Activated CD4-positive, alpha-beta memory T cell treated with anti-CD3 and anti-CD28 coated beads for 36 hours (primary cell): ENCODE measurements at regions of chr12 and their contacts with region 1.

Region 1: DNA sequence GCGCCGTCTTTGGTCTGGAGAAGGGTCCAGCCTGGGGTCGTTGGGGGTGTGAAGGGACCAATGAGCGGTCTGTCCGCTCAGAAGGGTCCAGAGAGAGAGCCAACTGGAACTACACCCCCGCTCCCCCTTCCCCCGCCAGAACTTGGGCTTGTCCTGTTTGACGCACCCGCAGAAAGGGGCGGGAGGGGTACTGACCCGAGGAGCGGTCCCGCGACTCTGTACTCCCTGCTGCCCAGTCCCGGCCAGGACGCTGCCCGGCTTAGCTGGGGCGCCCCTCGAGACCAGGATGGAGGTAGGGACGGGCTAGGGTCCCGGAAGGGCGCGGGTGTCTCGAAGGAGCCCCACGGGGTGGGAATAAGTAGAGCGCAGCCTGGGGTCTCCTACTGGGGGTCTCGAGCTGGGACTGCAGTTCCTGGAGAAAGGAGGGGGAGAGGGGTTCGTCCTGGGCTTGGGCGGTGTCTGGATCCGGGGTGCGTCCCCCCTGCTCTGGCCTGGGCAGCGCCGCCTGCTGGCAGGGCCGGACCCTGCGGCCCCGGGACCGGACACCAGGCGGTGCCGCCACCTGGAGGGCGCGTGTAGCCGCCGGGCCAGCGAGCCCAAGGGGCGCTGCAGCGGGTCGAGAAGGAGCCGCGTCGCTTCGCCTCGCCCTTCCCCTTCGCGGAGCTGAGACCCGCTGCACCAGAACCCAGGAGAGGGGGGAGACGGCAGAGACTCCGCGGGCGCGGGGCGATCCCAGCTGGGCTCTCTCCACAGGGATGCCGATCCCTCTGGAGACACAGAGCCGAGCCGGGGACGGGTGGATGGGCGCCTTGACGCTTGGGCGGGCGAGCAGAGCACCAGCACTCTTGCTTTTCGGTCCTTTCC is 3.8 kb upstream of the CACNB3 start:
- DNase-seq: peak; percentile 89
- H3K4me3 Mint-ChIP-seq: peak overlapping the region; percentile 88
- H3K27ac Mint-ChIP-seq: no peak overlapping the region
- H3K4me1 Mint-ChIP-seq: peaks cover 29% of the 10 kb centered on the region
- H3K27me3 Mint-ChIP-seq: peaks cover 7% of the 10 kb centered on the region

Region 2: GRCh38 chr12:48681738-48682532 is 132.6 kb before region 1 on chr12 and contains the start of gene KANSL2:
- CTCF ChIA-PET with region 1: interaction called, 5 read pairs
- POLR2A ChIA-PET with region 1: interaction called, 7 read pairs
- intact Hi-C with region 1: loop called (anchors 2 kb)
- DNase-seq: peak; percentile 99
- H3K4me3 Mint-ChIP-seq: peak within 1 kb of the TSS; percentile 99
- H3K27ac Mint-ChIP-seq: peak within 1 kb of the TSS; percentile 94
- H3K4me1 Mint-ChIP-seq: peaks cover 41% of the 10 kb centered on the region
- H3K27me3 Mint-ChIP-seq: no peaks in the 10 kb centered on the region
- total RNA-seq, gene KANSL2: 45.7 to 48.4 TPM

Region 3: GRCh38 chr12:48750769-48751735 is 63.4 kb before region 1 on chr12:
- CTCF ChIA-PET with region 1: interaction called, 22 read pairs
- POLR2A ChIA-PET with region 1: interaction called, 3 read pairs
- intact Hi-C with region 1: loop called (anchors 5 kb)
- DNase-seq: peak; percentile 27
- H3K4me3 Mint-ChIP-seq: no peak overlapping the region
- H3K27ac Mint-ChIP-seq: peak overlapping the region; percentile 76
- H3K4me1 Mint-ChIP-seq: peaks cover 20% of the 10 kb centered on the region
- H3K27me3 Mint-ChIP-seq: no peaks in the 10 kb centered on the region

Region 4: DNA sequence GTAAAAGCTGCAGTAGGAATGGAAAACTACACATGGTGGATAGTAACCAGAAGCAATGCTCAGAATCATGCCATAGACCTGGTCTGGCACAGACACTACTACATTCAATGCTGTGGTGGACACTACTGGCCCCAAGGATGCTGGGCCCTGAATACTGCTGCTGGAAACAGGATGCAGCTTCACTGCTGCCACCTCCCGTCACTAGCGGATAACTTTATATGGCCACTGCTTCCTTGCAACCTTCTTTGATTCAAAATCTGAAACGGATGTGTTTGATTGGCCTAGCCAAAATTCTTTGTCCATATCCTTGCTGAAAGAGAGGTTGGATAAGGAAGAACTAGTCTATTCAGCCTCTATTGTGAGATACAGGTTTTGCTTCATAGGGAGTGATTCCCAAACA is 56.3 kb before region 1 on chr12:
- CTCF ChIA-PET with region 1: interaction called, 22 read pairs
- POLR2A ChIA-PET with region 1: interaction called, 3 read pairs
- intact Hi-C with region 1: loop called (anchors 5 kb)
- DNase-seq: no peak
- H3K4me3 Mint-ChIP-seq: no peak overlapping the region
- H3K27ac Mint-ChIP-seq: no peak overlapping the region
- H3K4me1 Mint-ChIP-seq: no peaks in the 10 kb centered on the region
- H3K27me3 Mint-ChIP-seq: no peaks in the 10 kb centered on the region

Region 5: DNA sequence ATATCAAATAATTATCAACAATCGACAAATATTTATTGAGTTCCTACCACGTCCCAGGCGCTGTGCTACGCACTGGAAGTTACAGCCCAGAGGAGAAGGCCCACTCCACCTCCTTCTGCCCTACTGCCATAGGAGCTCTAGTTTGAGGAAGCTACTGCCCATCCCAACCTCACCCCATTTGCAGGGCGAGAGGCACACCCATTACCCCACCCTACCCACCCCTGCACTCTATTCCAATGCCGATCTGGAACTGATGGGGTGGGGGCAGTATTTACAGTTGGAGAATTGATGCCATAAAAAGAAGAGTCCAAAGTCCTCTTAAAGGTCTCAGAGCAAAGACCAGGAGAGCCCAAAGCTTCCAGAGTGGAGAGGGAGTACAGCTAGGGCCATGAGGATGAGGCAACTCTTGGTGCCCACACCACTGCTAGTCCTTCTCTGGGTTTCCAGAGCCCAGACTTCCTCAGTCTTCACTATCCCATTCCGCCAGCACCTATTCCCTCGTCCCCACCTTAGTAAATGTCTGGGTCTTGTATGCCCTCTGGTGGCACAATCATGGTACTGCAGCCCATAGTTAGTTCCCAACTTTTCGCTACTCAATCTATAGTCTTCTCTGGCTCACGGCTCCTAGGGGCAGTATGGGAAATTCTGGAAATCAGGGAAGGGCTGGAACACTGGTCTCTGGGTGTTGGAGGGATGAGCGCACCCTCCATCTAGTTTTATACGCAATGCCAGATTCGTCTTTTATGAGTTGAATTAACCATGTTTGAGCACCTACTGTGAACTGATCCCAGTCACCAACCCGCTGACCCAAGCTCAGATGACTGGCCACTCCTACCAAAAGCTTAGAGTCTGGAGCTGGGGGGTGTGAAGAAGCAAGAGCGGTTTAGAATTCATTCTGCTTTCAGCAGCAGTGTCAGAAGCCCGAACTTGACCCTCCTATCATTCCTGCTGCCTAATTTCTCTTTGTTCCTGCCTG is 18.7 kb before region 1 on chr12:
- CTCF ChIA-PET with region 1: interaction called, 38 read pairs
- POLR2A ChIA-PET with region 1: no interaction called
- intact Hi-C with region 1: no loop called
- DNase-seq: peak; percentile 71
- H3K4me3 Mint-ChIP-seq: no peak overlapping the region
- H3K27ac Mint-ChIP-seq: no peak overlapping the region
- H3K4me1 Mint-ChIP-seq: peaks cover 4% of the 10 kb centered on the region
- H3K27me3 Mint-ChIP-seq: peaks cover 3% of the 10 kb centered on the region

Region 6: DNA sequence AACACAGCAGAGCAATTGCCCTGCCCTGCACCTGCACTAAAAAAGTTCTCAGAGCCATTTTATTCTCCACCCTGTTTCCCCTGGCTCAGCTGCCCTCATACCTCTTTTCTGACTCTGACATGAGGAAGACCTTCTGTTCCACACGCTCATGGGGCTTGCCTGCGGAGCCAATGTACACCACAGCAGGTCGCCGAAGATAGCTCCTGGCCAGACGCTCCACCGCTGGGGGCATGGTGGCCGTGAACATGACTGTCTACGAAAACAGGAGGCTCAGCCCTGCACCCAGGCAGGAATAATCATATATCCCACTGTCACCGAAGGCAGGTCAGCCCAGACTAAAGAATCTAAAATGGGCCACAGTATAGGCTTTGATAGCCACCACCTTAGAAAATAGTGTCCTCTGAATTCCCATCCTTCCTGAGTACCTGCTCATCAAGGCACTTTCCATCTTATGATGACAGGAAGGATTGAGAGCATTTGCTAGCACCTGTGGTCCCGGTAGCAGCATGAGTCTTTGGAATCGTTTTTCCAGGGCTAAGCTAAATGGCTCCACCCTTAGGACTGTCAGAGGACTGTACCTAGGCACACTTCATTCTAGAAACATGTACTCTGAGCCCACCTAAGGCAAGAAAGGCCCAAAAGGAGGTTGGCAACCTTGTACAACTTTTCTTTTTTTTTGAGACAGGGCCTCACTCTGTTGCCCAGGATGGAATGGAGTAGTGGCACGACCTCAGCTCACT is 18.0 kb after region 1 on chr12:
- CTCF ChIA-PET with region 1: interaction called, 34 read pairs
- POLR2A ChIA-PET with region 1: no interaction called
- intact Hi-C with region 1: no loop called
- DNase-seq: no peak
- H3K4me3 Mint-ChIP-seq: no peak overlapping the region
- H3K27ac Mint-ChIP-seq: no peak overlapping the region
- H3K4me1 Mint-ChIP-seq: no peaks in the 10 kb centered on the region
- H3K27me3 Mint-ChIP-seq: no peaks in the 10 kb centered on the region

Region 7: GRCh38 chr12:48890657-48891418 is 76.3 kb after region 1 on chr12:
- CTCF ChIA-PET with region 1: interaction called, 7 read pairs
- POLR2A ChIA-PET with region 1: no interaction called
- intact Hi-C with region 1: loop called (anchors 1 kb)
- DNase-seq: peak; percentile 87
- H3K4me3 Mint-ChIP-seq: peak overlapping the region; percentile 32
- H3K27ac Mint-ChIP-seq: no peak overlapping the region
- H3K4me1 Mint-ChIP-seq: peaks cover 7% of the 10 kb centered on the region
- H3K27me3 Mint-ChIP-seq: peaks cover 12% of the 10 kb centered on the region

Region 8: DNA sequence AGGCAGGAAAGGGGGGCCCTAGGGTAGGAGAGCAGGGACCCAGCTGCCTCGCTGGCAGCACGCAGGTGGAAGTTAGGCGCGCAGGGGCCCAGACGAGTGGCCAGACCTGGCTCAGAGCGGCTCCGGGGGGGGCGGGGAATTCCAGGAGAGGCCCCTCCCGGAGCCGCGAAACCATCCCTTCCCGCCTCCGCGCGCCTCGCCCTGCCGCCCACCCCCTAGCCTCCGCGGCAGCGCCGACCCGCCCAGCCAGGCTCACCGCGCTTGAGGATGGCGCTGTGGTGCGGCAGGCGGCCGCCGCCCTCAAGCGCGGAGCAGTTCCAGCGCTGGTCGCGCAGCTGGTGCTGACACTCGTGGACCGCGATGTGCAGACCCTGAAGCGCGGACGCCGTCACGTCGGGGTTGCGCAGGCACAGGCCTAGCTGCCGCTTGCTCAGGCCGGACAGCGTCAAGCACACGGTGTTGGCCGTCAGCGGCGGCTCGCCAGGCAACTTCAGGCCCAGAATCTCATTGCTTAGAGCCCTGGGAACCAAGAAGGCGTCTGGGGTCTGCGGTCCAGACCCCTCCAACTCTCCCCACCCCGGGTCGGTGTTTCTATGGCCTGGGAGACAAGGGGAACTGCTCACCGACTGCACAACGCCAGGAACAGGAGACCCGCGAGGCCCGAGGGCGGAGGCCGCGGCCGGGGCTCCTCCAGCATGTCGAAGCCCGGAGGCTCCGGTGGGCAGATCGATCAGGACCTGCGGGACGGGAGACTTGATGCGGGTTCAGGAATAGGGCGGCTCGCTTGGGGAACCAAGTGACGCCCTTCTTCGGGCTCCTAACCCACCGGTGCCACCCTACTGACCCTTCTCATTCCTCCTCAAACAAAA is 155.6 kb after region 1 on chr12:
- CTCF ChIA-PET with region 1: no interaction called
- POLR2A ChIA-PET with region 1: no interaction called
- intact Hi-C with region 1: no loop called
- DNase-seq: peak; percentile 49
- H3K4me3 Mint-ChIP-seq: no peak overlapping the region
- H3K27ac Mint-ChIP-seq: no peak overlapping the region
- H3K4me1 Mint-ChIP-seq: peaks cover 37% of the 10 kb centered on the region
- H3K27me3 Mint-ChIP-seq: peaks cover 40% of the 10 kb centered on the region